Activated CD8-positive, alpha-beta memory T cell treated with anti-CD3 and anti-CD28 coated beads, Interleukin-2, amount 10 ng/mL, durations not matched to agents 7 days and 5 days (primary cell): ENCODE measurements at regions of chr16 and their contacts with region 1.

Region 1: DNA sequence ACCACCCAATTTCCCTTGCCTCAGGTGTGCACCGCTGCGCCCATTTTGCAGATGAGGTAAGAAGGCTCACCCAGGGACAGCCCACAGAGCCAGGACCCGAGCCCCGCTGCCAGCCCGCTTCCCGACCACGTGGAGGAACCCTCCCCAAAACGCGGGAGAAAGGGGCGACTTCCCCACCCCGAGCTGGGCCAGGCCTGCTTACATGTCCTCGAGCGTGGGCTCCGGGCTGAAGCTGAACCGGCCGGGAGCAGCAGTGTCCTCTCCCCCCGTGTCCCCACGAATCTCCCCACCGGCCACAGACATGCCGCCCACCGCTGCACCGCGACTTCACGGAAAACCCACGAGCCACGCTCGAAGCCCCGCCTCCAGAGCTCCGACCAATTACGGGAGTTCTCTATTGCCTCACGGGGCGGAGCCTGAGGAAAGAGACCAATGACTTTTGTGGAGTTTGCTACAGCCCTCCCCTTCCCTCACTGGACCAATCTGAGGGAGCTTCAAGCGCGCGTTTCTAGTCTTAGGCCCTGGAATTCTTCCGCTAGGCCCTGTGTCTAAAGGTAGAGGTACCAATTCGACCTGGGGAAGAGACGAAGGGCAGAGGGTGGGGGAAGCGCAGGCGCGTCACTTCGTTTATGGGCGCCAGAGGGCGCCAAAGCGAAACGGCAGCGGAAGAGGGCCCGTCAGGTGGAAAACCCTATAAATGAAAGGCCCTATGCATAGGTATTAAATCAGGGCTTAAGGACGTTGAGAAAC is at the start of gene DCTPP1:
- DNase-seq: peak; percentile 99
- ATAC-seq: peak; percentile 98
- H3K4me3 Mint-ChIP-seq: no peak within 1 kb of the TSS
- H3K27ac Mint-ChIP-seq: no peak within 1 kb of the TSS
- H3K4me1 Mint-ChIP-seq: peaks cover 38% of the 10 kb centered on the region
- H3K27me3 Mint-ChIP-seq: no peaks in the 10 kb centered on the region
- total RNA-seq, gene DCTPP1: 72.0 to 108 TPM

Region 2: DNA sequence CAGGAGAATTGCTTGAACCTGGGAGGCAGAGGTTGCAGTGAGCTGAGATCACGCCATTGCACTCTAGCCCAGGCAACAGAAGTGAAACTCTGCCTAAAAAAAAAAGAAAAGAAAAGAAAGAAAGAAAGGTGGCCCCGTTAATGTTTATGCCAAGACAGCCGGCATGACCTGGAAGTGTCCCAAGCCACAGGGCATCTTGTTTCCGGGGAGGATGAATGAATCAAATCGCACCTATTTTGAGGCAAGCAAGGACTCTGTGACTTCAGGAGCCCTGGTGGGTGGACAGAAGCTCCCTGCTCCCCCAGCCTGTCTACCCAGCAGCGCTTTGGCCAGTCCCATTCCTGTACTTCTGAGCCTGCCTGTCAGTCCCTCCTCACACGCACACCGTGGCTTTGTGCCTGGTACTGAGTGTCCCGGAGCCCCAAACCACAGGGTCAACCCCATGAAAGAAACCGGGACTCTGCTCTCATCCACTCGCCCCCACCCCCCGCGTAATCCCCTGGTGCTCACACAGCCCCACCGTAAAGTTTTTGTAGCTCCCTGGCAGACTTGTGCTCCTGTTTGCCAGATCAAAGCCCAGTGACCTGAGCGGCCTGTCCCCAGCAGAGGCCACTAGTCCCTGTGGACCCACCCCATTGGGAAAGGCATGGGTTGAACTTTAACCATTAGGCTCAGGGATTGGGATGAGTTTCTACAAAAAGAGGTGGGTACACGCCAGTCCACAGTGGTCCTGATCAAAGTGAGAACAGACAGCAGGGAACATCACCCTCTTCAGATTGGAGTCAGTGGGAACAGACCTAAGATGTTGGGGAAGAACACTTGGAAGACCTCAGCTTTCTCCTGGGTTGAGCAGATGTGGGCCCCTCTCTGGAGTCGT is 94.0 kb before region 1 on chr16:
- CTCF ChIA-PET with region 1: no interaction called
- DNase-seq: peak; percentile 56
- ATAC-seq: peak; percentile 1
- H3K4me3 Mint-ChIP-seq: peak overlapping the region; percentile 75
- H3K27ac Mint-ChIP-seq: peak overlapping the region; percentile 78
- H3K4me1 Mint-ChIP-seq: peaks cover 21% of the 10 kb centered on the region
- H3K27me3 Mint-ChIP-seq: no peaks in the 10 kb centered on the region

Region 3: DNA sequence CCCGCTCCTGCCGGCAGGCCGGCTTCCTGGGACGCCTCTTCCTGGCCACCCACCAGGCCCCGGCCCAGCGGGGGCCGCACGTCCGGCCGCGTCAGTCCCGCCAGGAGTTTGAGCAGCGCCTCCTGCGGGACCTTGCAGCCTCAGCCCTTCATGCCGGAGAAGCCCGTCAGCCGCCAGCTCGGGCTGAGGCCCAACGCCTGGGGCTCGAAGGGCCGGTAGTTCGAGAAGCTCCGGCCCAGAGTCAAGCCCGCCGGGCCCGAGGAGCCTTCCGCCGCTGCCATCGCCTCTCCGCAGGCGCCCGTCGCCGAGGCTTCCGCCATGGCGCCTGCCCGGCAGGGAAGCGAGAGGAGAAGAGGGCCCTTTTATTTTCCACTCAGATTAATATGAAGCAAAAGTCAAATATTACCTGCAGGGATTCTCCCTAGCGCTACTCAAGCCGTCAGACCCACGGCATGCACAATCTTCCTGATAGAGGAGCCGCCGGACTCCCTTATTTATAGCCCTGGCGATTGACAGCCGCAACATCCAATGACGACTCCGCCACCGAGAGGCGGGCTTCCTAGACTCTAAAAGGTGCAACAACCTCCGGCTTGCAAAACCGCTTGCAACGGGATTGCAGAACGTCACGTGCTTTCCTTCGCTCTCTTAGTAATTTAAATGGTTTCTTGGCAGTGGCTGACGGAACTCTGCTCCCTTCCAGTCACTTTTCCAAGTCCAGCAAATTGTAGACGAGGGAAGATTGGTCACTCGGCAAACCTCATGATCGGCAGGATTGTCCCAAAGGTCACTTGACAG is 15.8 kb after region 1 on chr16 and contains the start of gene SEPHS2:
- CTCF ChIA-PET with region 1: interaction called, 27 read pairs
- DNase-seq: peak; percentile 99
- ATAC-seq: peak; percentile 97
- H3K4me3 Mint-ChIP-seq: peak within 1 kb of the TSS; percentile 86
- H3K27ac Mint-ChIP-seq: peak within 1 kb of the TSS; percentile 90
- H3K4me1 Mint-ChIP-seq: peaks cover 51% of the 10 kb centered on the region
- H3K27me3 Mint-ChIP-seq: no peaks in the 10 kb centered on the region
- total RNA-seq, gene SEPHS2: 63.3 to 92.9 TPM

Region 4: DNA sequence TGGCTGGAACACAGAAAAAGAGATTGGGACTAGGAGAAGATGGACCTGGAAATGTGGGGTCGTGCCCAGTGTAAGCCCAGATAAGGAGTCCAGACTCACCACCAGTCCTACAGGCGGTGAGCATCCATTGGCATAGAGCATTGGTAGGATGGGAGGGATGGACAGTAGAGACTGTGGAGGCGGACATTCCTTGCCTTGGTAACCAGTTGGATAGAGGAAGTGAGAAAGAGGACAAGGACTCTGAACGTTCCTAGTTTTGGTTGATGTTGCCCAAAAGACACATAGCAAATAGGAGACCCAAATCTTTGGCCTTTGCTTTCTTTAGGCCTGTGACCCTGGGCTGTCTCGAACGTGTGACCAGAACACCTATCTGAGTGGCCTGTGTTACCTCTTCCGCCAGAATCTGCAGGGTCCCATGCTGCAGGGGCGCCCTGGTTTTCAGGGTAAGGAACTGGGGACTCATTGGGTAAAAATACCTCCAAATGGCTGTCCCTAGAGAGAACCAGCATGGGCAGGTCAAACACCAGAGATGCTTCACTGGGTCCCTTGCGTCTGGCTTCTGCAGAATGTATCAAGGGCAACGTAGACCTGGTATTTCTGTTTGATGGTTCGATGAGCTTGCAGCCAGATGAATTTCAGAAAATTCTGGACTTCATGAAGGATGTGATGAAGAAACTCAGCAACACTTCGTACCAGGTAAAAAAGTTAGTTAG is 49.1 kb after region 1 on chr16:
- CTCF ChIA-PET with region 1: interaction called, 29 read pairs
- DNase-seq: no peak
- ATAC-seq: no peak
- H3K4me3 Mint-ChIP-seq: no peak overlapping the region
- H3K27ac Mint-ChIP-seq: peak overlapping the region; percentile 68
- H3K4me1 Mint-ChIP-seq: peaks cover 81% of the 10 kb centered on the region
- H3K27me3 Mint-ChIP-seq: no peaks in the 10 kb centered on the region

Region 5: DNA sequence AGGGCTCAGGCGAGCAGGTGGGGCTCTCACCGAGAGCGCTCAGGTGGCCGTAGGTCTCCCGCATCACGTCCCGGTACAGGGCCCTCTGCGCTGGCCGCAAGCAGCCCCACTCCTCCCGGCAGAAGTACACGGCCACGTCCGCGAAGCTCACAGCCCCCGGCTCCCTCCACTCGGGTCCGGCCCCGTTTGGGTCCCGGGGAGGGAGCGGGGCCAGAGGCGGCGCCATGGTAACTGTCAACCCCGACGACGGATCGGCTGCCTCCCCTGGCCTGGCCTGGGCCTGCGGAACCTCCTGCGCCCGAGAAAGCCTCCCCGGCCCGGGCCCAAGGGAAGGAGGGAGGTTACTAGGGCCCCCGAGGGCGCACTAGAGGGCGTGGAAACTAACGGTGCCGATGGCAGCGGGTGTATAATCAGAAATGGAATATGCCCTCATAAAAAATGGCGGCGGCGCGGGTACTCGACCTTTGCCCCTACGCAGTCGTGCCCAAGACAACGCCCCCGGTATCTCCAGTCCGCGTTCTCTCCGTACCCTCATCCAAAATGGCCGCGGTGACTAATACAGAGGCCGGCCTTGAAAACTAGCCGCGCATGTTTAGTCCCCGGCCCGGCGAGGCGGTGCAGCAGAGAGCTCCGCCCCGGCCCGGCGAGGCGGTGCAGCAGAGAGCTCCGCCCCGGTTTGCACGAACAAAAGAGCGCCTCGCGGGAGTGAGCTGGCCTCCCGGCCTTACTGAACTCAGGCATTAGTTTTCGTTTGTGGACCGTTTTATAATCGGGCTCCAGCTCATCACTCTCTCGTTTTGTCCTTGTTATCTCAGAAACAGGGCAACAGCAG is 128.3 kb after region 1 on chr16 and contains the start of gene ZNF764:
- CTCF ChIA-PET with region 1: interaction called, 17 read pairs
- DNase-seq: peak; percentile 99
- ATAC-seq: peak; percentile 96
- H3K4me3 Mint-ChIP-seq: peak within 1 kb of the TSS; percentile 83
- H3K27ac Mint-ChIP-seq: peak within 1 kb of the TSS; percentile 87
- H3K4me1 Mint-ChIP-seq: peaks cover 41% of the 10 kb centered on the region
- H3K27me3 Mint-ChIP-seq: no peaks in the 10 kb centered on the region
- total RNA-seq, gene ZNF764: 14.0 to 15.6 TPM

Region 6: DNA sequence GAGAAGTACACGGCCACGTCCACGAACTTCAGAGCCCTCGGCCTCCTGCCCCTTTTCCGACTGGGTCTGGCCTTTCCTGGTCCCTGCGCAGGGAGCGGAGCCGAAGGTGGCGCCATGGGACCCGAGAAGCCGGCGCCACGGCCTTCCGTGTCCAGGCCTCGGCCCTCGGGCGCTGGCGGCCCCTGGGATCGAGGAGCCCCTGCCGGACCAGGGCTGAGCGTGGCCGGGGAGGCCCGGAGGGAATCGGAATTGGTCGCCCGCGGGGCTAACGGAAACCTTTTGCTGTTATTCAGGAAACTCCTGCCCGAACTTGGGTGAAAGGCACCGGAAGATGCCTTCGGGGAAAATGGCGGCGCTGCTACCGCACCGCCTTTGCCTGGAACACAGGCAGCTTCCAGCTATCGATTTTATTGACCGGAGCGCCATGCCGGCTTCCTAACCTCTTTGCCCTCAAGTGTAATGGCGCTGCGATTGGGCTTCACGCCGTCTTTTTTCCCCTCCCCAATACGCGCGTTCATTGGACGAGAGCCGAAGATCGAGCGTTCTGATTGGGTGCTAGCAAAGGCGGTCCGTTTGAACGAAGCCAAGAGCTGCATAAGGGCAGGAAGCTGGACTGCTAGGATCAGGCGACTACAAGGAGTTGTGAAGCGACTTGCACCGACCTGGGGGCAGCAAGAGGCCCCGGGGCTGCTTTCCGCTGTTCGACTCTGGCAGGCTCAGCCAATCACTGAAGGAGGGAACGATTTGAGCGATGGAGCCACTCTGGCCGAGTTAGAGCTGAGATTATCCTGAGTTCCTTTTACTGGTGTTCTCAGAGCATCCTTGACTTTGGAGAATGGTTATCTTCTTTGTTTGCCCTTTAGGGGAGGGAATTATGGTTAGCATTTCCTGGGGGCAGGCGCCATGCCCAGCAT is 180.3 kb after region 1 on chr16 and contains the start of gene ZNF689:
- CTCF ChIA-PET with region 1: interaction called, 21 read pairs
- DNase-seq: peak; percentile 97
- ATAC-seq: peak; percentile 94
- H3K4me3 Mint-ChIP-seq: peak within 1 kb of the TSS; percentile 80
- H3K27ac Mint-ChIP-seq: peak within 1 kb of the TSS; percentile 95
- H3K4me1 Mint-ChIP-seq: peaks cover 24% of the 10 kb centered on the region
- H3K27me3 Mint-ChIP-seq: no peaks in the 10 kb centered on the region
- total RNA-seq, gene ZNF689: 12.2 to 15.3 TPM

Region 7: GRCh38 chr16:30657866-30658730 is 228.2 kb after region 1 on chr16 and contains the start of gene FBRS:
- CTCF ChIA-PET with region 1: interaction called, 10 read pairs
- DNase-seq: peak; percentile 100
- ATAC-seq: peak; percentile 75
- H3K4me3 Mint-ChIP-seq: peak within 1 kb of the TSS; percentile 86
- H3K27ac Mint-ChIP-seq: peak within 1 kb of the TSS; percentile 100
- H3K4me1 Mint-ChIP-seq: peaks cover 48% of the 10 kb centered on the region
- H3K27me3 Mint-ChIP-seq: no peaks in the 10 kb centered on the region
- total RNA-seq, gene FBRS: 102 to 142 TPM